SK-N-SH (cell line): ENCODE measurements at regions of chr7 and their contacts with region 1.

Region 1: DNA sequence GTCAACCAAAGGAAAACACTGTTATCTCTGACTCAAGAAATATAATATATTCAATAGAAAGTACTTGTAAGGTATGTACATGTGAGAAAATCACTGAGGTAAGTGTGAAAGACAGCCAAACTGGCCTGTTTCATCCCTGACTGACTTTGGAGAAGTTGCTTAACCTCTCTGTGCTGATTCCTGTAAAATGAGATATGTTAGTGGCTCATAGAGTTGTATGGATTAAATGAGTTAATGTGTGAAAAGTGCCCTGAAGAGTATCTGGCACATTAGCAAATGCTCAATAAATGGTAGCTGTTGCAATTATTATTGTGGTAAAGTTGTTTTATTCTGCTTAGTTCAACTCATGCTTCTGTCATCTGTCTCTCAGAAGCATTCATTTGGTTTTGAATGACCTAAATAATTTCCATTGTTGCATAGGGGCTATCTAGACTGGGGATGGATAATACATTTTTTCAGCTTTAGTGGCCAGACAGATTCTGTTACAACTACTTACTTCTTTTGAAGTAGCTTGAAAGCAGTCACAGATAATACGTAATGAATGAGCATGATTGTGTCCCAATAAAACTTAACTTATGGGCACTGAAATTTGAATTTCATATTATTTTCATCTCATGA is 84.3 kb downstream of the SKAP2 start:
- DNase-seq: no peak
- H3K4me3 ChIP-seq: no peak overlapping the region
- H3K27ac ChIP-seq: no peak overlapping the region
- H3K4me1 ChIP-seq: no peaks in the 10 kb centered on the region; a peak in 1 of 4 replicates
- H3K27me3 ChIP-seq: no peaks in the 10 kb centered on the region
- CTCF ChIP-seq: no peak
- EP300 ChIP-seq: no peak
- RAD21 ChIP-seq: no peak

Region 2: DNA sequence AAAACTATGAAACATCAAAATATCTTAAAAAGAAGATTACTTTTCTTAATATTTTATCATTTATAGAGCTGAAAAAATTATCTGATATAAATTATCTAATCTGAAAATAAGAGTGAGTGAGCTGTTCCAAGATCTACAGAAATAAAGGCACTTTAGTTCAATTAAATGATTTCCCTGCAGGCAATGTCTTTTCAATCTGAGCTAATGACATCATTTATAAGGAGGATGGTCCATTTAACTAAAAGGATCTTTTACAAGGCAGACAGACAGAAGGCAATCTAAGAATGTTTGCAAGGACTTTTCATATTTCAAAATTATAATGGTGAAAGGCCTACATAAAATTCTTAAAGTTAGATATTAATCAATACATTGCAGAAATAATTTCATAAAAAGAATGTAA is 12.5 kb after region 1 on chr7:
- CTCF ChIA-PET with region 1: interaction called, 12 read pairs
- POLR2A ChIA-PET with region 1: no interaction called
- DNase-seq: no peak
- H3K4me3 ChIP-seq: no peak overlapping the region
- H3K27ac ChIP-seq: no peak overlapping the region
- H3K4me1 ChIP-seq: peaks cover 0 to 3% of the 10 kb centered on the region in 2 experiments; a peak in 2 of 4 replicates
- H3K27me3 ChIP-seq: no peaks in the 10 kb centered on the region
- CTCF ChIP-seq: no peak
- EP300 ChIP-seq: no peak
- RAD21 ChIP-seq: no peak